ENCODE measurements at regions of chr15 and their contacts with region 1.

Region 1: GRCh38 chr15:67080900-67081431 is 15.6 kb downstream of the SMAD3 start:
- DNase-seq: no peak
- H3K4me3 Mint-ChIP-seq: no peak overlapping the region
- H3K27ac Mint-ChIP-seq: peak overlapping the region; percentile 78
- H3K4me1 Mint-ChIP-seq: peaks cover 91% of the 10 kb centered on the region
- H3K27me3 Mint-ChIP-seq: no peaks in the 10 kb centered on the region

Region 2: GRCh38 chr15:67024314-67024997 is 56.5 kb before region 1 on chr15:
- intact Hi-C with region 1: loop called (anchors 1 kb)
- DNase-seq: no peak
- H3K4me3 Mint-ChIP-seq: peak overlapping the region; percentile 6
- H3K27ac Mint-ChIP-seq: no peak overlapping the region
- H3K4me1 Mint-ChIP-seq: peaks cover 38% of the 10 kb centered on the region
- H3K27me3 Mint-ChIP-seq: peaks cover 18% of the 10 kb centered on the region

Region 3: GRCh38 chr15:67039384-67040075 is 41.4 kb before region 1 on chr15:
- intact Hi-C with region 1: loop called (anchors 2 kb)
- DNase-seq: no peak
- H3K4me3 Mint-ChIP-seq: peak overlapping the region; percentile 33
- H3K27ac Mint-ChIP-seq: peak overlapping the region; percentile 24
- H3K4me1 Mint-ChIP-seq: peaks cover 14% of the 10 kb centered on the region
- H3K27me3 Mint-ChIP-seq: no peaks in the 10 kb centered on the region

Region 4: DNA sequence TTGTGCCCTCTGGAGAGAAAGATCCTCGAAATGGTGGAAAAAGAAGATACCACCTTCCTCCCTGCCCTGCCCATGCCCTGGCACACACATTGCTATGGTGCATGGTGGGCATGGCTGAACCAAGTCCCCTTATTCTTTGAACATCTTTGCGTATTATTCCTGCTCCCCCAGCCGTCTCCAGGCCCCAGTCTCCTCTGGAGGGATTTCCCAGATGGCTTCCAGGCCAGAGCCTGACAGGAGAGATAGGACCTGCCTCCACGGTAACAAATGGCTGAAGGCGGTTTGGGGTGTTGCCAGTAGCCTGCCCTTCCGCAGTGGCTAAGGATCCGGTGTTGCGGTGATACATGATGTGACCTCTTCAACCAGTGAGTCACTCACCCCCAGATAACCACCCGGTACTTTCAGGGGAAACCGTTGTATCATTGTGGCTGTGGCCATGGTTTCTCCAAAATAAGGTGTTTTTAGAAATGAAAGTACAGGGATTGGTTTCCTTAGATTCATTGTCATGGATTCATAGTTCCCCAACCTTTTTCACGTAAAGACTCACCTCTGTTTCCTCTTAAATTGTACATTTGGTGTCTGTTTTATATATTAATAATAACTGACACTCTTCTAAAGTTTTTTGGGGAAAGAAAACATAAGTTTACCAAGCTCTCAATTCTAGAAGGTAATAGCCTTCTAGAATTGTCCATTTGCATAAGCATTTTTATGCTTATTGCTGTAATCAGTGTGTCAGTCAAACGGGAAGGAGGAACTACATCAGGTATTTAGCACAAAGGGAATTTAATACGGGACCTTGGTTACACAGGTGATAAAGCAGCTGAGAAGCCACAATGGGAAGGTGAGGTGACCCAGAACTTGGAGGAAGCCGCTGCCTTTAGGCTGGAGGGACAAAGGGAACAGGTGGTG is 10.4 kb after region 1 on chr15:
- intact Hi-C with region 1: loop called (anchors 1 kb)
- DNase-seq: peak; percentile 80
- H3K4me3 Mint-ChIP-seq: peak overlapping the region; percentile 37
- H3K27ac Mint-ChIP-seq: peak overlapping the region; percentile 77
- H3K4me1 Mint-ChIP-seq: peaks cover 93% of the 10 kb centered on the region
- H3K27me3 Mint-ChIP-seq: no peaks in the 10 kb centered on the region

Region 5: GRCh38 chr15:67142767-67143100 is 61.8 kb after region 1 on chr15:
- intact Hi-C with region 1: no loop called
- DNase-seq: no peak
- H3K4me3 Mint-ChIP-seq: no peak overlapping the region
- H3K27ac Mint-ChIP-seq: no peak overlapping the region
- H3K4me1 Mint-ChIP-seq: peaks cover 63% of the 10 kb centered on the region
- H3K27me3 Mint-ChIP-seq: no peaks in the 10 kb centered on the region

Region 6: DNA sequence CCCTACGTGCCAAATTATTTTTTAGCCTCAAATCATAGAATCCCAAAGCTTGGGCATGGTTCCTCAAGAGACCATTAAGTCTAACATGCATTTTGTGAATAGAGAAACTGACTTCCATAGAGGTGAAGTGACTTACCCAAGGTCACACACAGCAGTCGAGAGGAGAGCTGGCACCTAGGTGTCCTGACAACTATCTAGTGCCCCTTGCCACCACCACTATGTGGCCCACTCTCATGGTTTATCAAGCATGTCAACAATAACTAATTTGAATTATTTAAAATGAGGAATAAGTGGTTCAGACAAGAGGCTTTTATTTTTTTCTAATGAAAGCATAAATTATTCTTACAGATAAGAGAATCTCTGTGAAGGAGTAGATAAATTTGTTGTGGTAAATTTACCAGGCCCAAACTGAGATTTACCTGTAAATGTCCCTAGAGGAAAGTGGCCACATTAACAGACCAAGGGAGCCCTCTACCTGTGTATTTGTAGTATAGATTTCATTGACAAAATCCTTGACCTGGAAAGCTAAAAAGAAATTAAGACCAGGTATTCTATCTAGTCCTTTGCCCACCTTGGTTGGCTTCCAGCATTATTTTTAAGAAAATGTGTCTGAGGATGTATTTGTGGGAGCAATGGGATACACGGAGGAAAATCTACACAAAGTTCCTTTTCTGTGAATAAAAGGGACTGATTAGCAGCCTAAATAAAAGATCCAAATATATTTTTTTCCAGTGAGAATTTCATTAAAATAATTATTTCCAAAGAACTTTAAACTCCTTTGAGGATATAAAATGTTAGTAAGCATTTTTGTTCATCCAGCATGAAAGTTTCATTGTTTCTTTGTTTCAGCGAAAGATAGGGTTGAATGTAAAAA is 222.8 kb after region 1 on chr15:
- intact Hi-C with region 1: loop called (anchors 1 kb)
- DNase-seq: no peak
- H3K4me3 Mint-ChIP-seq: no peak overlapping the region
- H3K27ac Mint-ChIP-seq: no peak overlapping the region
- H3K4me1 Mint-ChIP-seq: peaks cover 8% of the 10 kb centered on the region
- H3K27me3 Mint-ChIP-seq: peaks cover 32% of the 10 kb centered on the region

Measured in activated T-helper 2 cell treated with anti-CD3 and anti-CD28 coated beads, Interferon-gamma antibody, Interleukin-2, Interleukin-4, amounts not matched to agents 10 μg/mL and 5 μg/mL and 100 μg/mL, durations not matched to agents 14 hours and 24 hours and 36 hours (primary cell).